ENCODE measurements at regions of chr5 and their contacts with region 1.

Region 1: DNA sequence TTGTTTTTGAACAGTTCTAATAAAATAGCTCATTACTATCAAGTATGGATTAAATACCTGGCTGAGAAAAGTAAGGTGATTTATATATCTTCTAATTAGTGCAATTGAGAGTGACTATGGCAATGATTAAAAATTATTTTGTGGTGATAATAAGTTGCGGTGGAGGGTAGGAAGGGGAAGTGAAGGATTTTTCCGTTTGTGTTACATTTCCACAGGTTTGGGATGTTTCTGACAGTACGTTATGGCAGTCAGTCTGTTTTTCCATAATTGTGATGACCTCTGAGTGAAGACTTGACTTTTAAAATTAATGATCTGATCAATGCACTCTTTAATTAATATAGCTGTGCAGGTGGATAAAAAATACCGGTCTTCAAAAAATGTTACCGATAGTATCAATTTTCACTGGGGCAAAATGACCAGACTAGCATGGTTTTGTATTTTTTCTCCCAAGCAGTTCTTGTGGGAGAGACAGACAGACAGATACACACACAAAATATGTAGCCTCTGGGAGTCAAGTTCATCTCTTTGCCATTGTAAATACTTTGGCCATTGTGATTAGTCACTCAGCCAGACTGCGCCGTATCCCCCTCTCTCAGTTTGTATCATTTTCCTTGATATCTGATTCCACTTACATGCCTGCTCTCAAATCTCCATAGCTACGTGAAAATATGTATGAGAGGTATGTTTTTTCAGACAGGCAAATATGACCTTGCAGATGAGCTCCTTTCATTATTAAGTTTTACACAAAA is 60.2 kb downstream of the ARHGAP26 start:
- DNase-seq: no peak
- H3K4me3 ChIP-seq: no peak overlapping the region
- H3K27ac ChIP-seq: peak overlapping the region in 2 of 4 donors; percentile 14 to 31
- H3K4me1 ChIP-seq: peaks cover 24 to 84% (median 49%) of the 10 kb centered on the region in 4 donors
- H3K27me3 ChIP-seq: no peaks in the 10 kb centered on the region
- CTCF ChIP-seq: no peak
- EP300 ChIP-seq: no peak
- POLR2A ChIP-seq: no peak

Region 2: DNA sequence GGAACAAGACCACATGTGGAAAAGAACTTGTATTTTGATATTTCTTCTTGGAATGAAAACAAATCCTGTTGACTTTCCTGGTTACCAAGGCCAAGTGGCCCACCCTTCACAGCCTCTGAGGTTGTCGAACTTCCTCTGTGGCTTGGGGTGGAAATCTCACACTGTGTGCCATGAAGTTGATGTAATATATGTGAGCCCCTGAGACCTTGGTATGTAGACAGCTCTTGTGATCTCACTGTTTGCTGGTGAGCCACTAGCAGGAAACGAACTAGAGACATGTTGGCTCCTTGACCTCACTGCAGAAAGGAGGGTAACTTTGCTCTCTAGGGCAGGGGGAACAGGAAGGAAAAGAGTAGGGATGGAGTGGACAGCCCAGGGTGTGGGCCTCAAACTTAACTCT is 99.2 kb after region 1 on chr5:
- in situ Hi-C with region 1: no loop called
- intact Hi-C with region 1: no loop called
- DNase-seq: peak; percentile 13
- H3K4me3 ChIP-seq: no peak overlapping the region
- H3K27ac ChIP-seq: no peak overlapping the region
- H3K4me1 ChIP-seq: peaks cover 0 to 12% (median 0%) of the 10 kb centered on the region in 4 donors
- H3K27me3 ChIP-seq: no peaks in the 10 kb centered on the region
- CTCF ChIP-seq: no peak
- EP300 ChIP-seq: no peak
- POLR2A ChIP-seq: no peak

Region 3: DNA sequence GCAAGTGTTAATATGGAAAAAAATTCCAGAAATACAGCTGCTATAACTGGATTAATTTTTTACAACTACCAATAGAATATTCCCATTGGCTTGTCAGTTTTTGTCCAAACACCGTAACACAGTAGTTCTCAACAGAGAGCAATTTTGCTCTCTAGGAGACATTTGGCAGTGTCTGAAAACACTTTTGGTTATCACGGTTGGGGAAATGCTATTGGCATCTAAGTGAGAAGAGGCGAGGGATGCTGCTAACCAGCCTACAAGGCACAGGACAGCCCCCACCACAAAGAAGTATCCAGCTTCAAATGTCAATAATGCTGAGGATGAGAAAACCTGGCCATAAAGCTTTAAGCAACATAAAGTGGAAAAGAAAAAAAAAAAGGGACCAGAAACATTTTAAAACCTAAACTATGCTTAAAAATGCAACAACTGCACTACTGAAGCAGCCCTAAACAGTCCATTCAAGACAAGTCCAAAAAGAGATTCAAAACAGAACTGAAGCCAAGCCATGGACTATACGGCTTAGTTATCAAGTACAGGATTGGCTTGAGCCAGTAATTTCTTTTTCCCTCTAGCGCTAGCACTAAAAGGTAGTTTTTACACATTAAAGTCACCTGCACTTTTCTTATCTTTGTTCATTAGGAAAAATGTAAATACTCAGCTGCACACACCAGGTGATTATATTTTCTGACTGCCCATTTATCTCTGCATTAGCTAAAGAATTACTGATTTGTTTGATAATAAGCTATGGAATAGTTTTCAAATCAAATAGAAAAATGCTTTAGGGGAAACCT is 489.2 kb after region 1 on chr5:
- in situ Hi-C with region 1: no loop called
- intact Hi-C with region 1: loop called (anchors 5 kb)
- DNase-seq: no peak
- H3K4me3 ChIP-seq: no peak overlapping the region
- H3K27ac ChIP-seq: no peak overlapping the region
- H3K4me1 ChIP-seq: peaks cover 0 to 15% (median 3%) of the 10 kb centered on the region in 4 donors
- H3K27me3 ChIP-seq: no peaks in the 10 kb centered on the region
- CTCF ChIP-seq: no peak
- EP300 ChIP-seq: no peak
- POLR2A ChIP-seq: no peak